Dendritic cell treated with granulocyte-macrophage colony-stimulating factor and Interleukin-4, amounts not matched to agents 40 ng/mL and 50 ng/mL, for 4 days (primary cell): ENCODE measurements at regions of chr1 and their contacts with region 1.

Region 1: DNA sequence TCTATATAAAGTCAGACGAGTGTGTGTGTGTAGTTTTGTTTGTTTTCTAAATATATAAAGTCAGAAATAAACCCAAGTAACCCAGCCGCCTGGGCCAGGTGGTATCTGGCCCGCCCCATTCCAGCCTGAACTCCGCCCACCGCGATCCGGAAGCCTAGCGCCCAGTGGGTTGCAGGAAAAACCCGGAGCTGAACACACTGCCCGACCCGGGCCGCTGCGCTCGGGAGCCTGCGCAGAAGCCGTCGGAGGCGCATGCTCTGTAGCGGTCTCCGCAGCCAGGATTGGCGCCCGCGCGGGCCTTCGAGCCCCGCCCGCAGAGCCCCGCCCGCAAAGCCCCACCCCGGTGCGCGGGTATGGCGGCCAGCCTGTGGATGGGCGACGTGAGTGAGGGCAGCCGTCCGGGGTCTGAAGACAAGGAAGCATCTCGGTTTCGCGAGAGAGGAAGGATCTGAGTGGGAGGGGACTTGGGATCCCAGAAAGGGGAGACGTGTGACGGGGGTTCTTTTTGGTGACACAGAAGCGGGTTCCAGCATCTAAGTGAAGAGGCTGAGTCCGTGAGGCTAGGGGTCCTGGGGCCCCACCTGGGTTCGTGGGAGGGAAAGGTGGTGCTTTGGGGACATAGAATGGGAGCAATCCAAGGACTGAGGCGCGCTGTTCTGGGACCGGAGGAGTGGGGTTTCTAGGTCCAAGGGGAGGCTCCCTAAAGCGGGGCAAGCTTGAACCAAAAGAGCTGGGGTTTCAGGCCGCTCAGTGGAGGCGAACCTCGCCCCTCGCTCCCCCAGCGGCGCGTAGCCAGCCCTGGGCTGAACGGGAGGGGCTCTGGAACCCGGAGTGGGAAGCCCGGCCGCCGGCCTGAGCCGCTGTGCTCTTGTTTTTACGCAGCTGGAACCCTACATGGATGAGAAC is at the start of gene TRNAU1AP:
- H3K4me3 Mint-ChIP-seq: peak within 1 kb of the TSS; percentile 95
- H3K27ac Mint-ChIP-seq: peak within 1 kb of the TSS; percentile 94
- H3K4me1 Mint-ChIP-seq: no peaks in the 10 kb centered on the region
- H3K27me3 Mint-ChIP-seq: no peaks in the 10 kb centered on the region

Region 2: GRCh38 chr1:28518000-28518744 is 34.8 kb before region 1 on chr1:
- intact Hi-C with region 1: loop called (anchors 5 kb)
- H3K4me3 Mint-ChIP-seq: peak overlapping the region; percentile 86
- H3K27ac Mint-ChIP-seq: peak overlapping the region; percentile 41
- H3K4me1 Mint-ChIP-seq: peaks cover 27% of the 10 kb centered on the region
- H3K27me3 Mint-ChIP-seq: no peaks in the 10 kb centered on the region